Activated naive CD4-positive, alpha-beta T cell treated with anti-CD3 and anti-CD28 coated beads for 36 hours (primary cell): ENCODE measurements at regions of chr12 and their contacts with region 1.

Region 1: DNA sequence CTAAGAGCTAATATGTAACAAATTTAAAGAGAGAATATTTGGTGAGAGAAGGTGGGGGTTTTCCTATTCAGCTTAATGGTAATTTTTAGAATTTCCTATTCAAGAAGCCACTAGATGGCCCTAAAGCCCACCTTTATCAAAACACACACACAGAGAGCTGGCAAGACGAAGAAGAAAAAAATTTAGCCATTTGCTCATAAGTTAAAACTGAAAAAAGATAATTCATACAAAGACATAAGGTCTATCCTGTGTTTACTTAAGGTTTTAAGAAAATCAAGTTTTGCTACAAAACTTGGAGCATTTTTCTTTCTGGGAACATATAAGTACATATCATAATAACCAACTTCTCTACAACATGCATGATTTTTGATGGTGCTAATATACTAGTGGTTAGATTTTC is 46.8 kb upstream of the PCED1B start:
- DNase-seq: peak; percentile 34
- H3K4me3 Mint-ChIP-seq: no peak overlapping the region
- H3K27ac Mint-ChIP-seq: peak overlapping the region; percentile 79
- H3K4me1 Mint-ChIP-seq: peaks cover 43% of the 10 kb centered on the region
- H3K27me3 Mint-ChIP-seq: no peaks in the 10 kb centered on the region

Region 2: GRCh38 chr12:46884362-46884761 is 148.3 kb before region 1 on chr12:
- CTCF ChIA-PET with region 1: no interaction called
- intact Hi-C with region 1: no loop called
- DNase-seq: no peak
- H3K4me3 Mint-ChIP-seq: no peak overlapping the region
- H3K27ac Mint-ChIP-seq: no peak overlapping the region
- H3K4me1 Mint-ChIP-seq: no peaks in the 10 kb centered on the region
- H3K27me3 Mint-ChIP-seq: peaks cover 3% of the 10 kb centered on the region

Region 3: GRCh38 chr12:47071241-47071852 is 38.7 kb after region 1 on chr12:
- CTCF ChIA-PET with region 1: interaction called, 46 read pairs
- intact Hi-C with region 1: loop called (anchors 1 kb)
- DNase-seq: peak; percentile 19
- H3K4me3 Mint-ChIP-seq: no peak overlapping the region
- H3K27ac Mint-ChIP-seq: no peak overlapping the region
- H3K4me1 Mint-ChIP-seq: peaks cover 26% of the 10 kb centered on the region
- H3K27me3 Mint-ChIP-seq: no peaks in the 10 kb centered on the region

Region 4: GRCh38 chr12:47207340-47207717 is 174.7 kb after region 1 on chr12:
- CTCF ChIA-PET with region 1: interaction called, 14 read pairs
- intact Hi-C with region 1: loop called (anchors 5 kb)
- DNase-seq: peak; percentile 81
- H3K4me3 Mint-ChIP-seq: peak overlapping the region; percentile 94
- H3K27ac Mint-ChIP-seq: peak overlapping the region; percentile 100
- H3K4me1 Mint-ChIP-seq: peaks cover 71% of the 10 kb centered on the region
- H3K27me3 Mint-ChIP-seq: no peaks in the 10 kb centered on the region

Region 5: DNA sequence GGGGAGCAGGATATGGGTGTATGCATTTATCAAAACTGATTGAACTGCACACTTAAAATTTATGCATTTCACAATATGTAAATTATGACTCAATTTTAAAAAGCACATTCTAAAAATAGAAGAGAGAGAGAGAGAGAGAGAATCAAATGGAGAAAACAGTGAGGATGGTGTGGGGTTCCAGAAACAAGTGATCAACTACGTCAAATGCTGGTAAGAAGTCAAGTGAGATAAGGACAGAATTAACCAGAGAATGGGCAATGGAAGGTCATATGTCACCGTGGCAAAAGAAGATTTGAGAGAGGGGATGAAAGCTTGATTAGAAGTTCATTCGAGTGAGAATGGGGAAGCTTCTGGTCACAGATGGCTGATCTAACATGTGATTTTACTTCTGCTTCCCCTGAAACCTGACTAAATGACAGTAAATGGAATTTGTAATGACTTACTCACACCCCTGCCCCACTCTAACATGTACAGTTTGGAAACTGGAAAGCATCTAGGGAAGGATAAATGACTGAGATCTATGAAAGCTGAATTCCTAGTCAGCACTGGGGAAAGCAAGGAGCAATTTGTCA is 323.6 kb after region 1 on chr12:
- CTCF ChIA-PET with region 1: interaction called, 4 read pairs
- intact Hi-C with region 1: loop called (anchors 2 kb)
- DNase-seq: peak; percentile 72
- H3K4me3 Mint-ChIP-seq: peak overlapping the region; percentile 64
- H3K27ac Mint-ChIP-seq: peak overlapping the region; percentile 100
- H3K4me1 Mint-ChIP-seq: peaks cover 82% of the 10 kb centered on the region
- H3K27me3 Mint-ChIP-seq: no peaks in the 10 kb centered on the region

Region 6: GRCh38 chr12:47651368-47652254 is 619.0 kb after region 1 on chr12:
- CTCF ChIA-PET with region 1: interaction called, 15 read pairs
- intact Hi-C with region 1: loop called (anchors 1 kb)
- DNase-seq: peak; percentile 70
- H3K4me3 Mint-ChIP-seq: no peak overlapping the region
- H3K27ac Mint-ChIP-seq: peak overlapping the region; percentile 26
- H3K4me1 Mint-ChIP-seq: peaks cover 18% of the 10 kb centered on the region
- H3K27me3 Mint-ChIP-seq: no peaks in the 10 kb centered on the region